ENCODE measurements at regions of chr2 and their contacts with region 1.

Region 1: GRCh38 chr2:37268111-37268510 is 36.7 kb downstream of the NDUFAF7 start:
- DNase-seq: no peak
- ATAC-seq: no peak
- H3K4me3 ChIP-seq: no peak overlapping the region
- H3K4me3 Mint-ChIP-seq: no peak overlapping the region
- H3K27ac ChIP-seq: no peak overlapping the region
- H3K27ac Mint-ChIP-seq: no peak overlapping the region
- H3K4me1 ChIP-seq: no peaks in the 10 kb centered on the region
- H3K4me1 Mint-ChIP-seq: peaks cover 3% of the 10 kb centered on the region
- H3K27me3 ChIP-seq: no peaks in the 10 kb centered on the region
- H3K27me3 Mint-ChIP-seq: no peaks in the 10 kb centered on the region
- CTCF ChIP-seq: no peak

Region 2: GRCh38 chr2:37306024-37306423 is 37.9 kb after region 1 on chr2:
- CTCF ChIA-PET with region 1: interaction called, 3 read pairs
- POLR2A ChIA-PET with region 1: no interaction called
- intact Hi-C with region 1: loop called in 1 of 2 experiments (anchors 5 kb)
- DNase-seq: no peak
- ATAC-seq: no peak
- H3K4me3 ChIP-seq: no peak overlapping the region
- H3K4me3 Mint-ChIP-seq: no peak overlapping the region
- H3K27ac ChIP-seq: no peak overlapping the region
- H3K27ac Mint-ChIP-seq: no peak overlapping the region
- H3K4me1 ChIP-seq: peaks cover 10% of the 10 kb centered on the region
- H3K4me1 Mint-ChIP-seq: peaks cover 47% of the 10 kb centered on the region
- H3K27me3 ChIP-seq: no peaks in the 10 kb centered on the region
- H3K27me3 Mint-ChIP-seq: no peaks in the 10 kb centered on the region
- CTCF ChIP-seq: no peak